ENCODE measurements at regions of chr10 and their contacts with region 1.

Region 1: DNA sequence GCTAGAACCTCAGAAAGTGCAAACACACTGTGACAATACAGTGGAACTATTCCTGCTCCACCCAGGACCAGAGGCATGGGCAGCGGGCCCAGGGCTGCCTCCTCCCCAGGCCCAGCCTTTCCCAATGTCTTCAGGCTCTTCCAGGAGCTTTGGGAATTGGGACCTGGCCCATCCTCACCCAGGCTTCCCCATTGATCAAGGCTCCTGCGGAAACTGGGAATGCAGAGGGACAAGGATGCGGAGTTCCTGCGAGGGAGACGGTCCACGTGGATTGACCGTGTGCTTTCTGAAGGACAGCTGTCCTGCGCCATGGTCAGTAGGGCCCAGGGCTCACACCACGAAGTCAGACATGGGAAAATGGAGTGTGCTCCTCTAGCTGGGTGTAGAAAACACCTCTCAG is 56.6 kb downstream of the CSGALNACT2 start:
- DNase-seq: no peak
- ATAC-seq: no peak
- H3K4me3 ChIP-seq: no peak overlapping the region
- H3K4me3 Mint-ChIP-seq: no peak overlapping the region
- H3K27ac ChIP-seq: no peak overlapping the region
- H3K27ac Mint-ChIP-seq: no peak overlapping the region
- H3K4me1 ChIP-seq: no peaks in the 10 kb centered on the region
- H3K4me1 Mint-ChIP-seq: no peaks in the 10 kb centered on the region
- H3K27me3 ChIP-seq: no peaks in the 10 kb centered on the region
- H3K27me3 Mint-ChIP-seq: no peaks in the 10 kb centered on the region

Region 2: DNA sequence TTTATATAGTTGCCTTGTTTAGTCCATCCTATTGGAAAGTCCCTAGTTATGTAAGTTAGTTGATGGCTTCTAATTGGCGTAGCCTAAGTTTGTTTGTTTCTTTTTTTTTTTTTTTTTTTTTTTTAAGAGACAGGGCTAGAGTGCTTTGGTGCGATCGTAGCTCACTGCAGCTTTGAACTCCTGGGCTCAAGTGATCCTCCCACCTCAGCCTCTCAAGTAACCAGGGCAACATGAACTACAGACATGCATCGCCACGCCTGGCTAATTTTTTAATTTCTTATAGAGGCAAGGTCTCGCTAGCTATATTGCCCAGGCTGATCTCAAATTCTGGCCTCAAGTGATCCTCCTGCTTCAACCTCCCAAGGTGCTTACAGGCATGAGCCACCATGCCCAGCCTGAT is 49.5 kb before region 1 on chr10:
- CTCF ChIA-PET with region 1: no interaction called
- POLR2A ChIA-PET with region 1: interaction called in 1 of 2 experiments, 14 read pairs
- DNase-seq: peak in 1 of 35 experiments; percentile 20
- ATAC-seq: peak in 1 of 4 experiments; percentile 22
- H3K4me3 ChIP-seq: no peak overlapping the region
- H3K4me3 Mint-ChIP-seq: no peak overlapping the region
- H3K27ac ChIP-seq: no peak overlapping the region
- H3K27ac Mint-ChIP-seq: peak overlapping the region in 1 of 2 donors; percentile 39
- H3K4me1 ChIP-seq: peaks cover 23 to 28% of the 10 kb centered on the region in 2 experiments
- H3K4me1 Mint-ChIP-seq: peaks cover 79 to 81% (median 81%) of the 10 kb centered on the region in 3 donors
- H3K27me3 ChIP-seq: no peaks in the 10 kb centered on the region
- H3K27me3 Mint-ChIP-seq: no peaks in the 10 kb centered on the region